ENCODE measurements at regions of chr7 and their contacts with region 1.

Region 1: GRCh38 chr7:27901028-27901760 is 161.2 kb downstream of the TAX1BP1 start:
- DNase-seq: peak; percentile 34
- H3K4me3 Mint-ChIP-seq: no peak overlapping the region
- H3K27ac Mint-ChIP-seq: no peak overlapping the region
- H3K4me1 Mint-ChIP-seq: peaks cover 19% of the 10 kb centered on the region
- H3K27me3 Mint-ChIP-seq: no peaks in the 10 kb centered on the region

Region 2: DNA sequence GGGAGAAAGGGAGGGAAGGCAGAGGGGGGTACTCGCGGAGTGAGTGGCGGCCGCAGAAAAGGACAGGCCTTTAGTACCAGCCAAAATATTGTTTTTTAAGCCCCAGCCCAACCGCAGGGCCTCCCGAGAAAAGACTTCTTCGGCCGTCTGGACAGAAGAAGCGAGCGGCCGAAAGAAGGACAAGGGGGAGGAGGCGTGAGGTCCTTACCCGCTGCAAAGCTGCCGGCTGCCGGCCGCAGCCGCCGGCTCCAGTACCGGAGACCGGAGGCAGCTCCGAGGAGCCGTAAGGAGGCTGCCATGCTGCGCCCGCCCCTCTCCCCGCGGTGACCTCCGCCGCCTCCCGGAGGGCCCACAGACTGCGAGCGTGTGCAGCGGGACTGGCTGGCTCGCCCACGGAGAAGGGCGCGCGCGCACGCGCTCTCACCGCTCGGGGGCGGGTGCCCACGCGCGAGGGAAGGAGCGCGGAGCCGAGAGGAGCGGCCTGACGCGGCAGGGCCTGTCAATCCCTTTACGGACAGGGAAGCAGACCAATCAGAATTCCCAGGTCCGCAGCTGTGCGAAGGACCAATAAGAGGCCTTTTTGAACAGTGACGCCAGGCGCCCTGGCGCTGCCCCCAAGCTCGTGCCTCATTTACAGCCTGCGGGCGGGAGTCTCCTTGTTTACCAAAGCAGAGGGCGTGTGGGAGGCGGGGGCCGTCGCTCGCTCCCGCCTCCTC is 238.5 kb before region 1 on chr7 and contains the start of gene HIBADH:
- CTCF ChIA-PET with region 1: no interaction called
- POLR2A ChIA-PET with region 1: no interaction called
- intact Hi-C with region 1: loop called (anchors 1 kb)
- DNase-seq: peak; percentile 96
- H3K4me3 Mint-ChIP-seq: peak within 1 kb of the TSS; percentile 76
- H3K27ac Mint-ChIP-seq: peak within 1 kb of the TSS; percentile 76
- H3K4me1 Mint-ChIP-seq: peaks cover 14% of the 10 kb centered on the region
- H3K27me3 Mint-ChIP-seq: no peaks in the 10 kb centered on the region
- total RNA-seq, gene HIBADH: 21.9 to 22.6 TPM

Region 3: DNA sequence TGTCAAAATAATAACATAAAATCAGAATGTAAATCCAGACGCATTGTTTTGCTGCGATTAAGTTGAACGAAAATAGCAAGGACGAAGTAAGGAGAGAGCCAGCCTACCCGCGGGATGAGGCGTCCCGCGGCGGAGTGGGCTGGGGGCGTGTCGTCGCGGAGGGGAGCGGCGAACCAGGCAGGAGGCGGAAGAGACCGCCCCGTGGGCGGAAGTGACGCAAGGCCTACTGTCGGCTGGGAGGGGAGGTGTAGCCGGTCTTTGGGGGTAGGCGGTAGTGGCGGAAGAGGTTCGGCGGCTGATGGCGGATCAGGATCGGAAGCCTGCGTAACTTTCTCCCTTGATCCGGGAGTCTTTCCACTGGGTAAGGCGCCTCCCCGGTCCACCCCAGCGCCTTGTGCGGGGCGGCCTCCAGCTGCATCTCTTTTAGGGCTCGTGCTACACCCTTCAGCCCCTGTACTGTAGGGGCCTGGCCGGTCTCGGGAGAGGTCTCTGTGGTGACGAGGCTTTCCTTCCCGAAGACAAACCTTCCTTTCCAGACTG is 161.2 kb before region 1 on chr7 and contains the start of gene TAX1BP1:
- CTCF ChIA-PET with region 1: no interaction called
- POLR2A ChIA-PET with region 1: no interaction called
- intact Hi-C with region 1: loop called (anchors 1 kb)
- DNase-seq: peak; percentile 97
- H3K4me3 Mint-ChIP-seq: peak within 1 kb of the TSS; percentile 87
- H3K27ac Mint-ChIP-seq: peak within 1 kb of the TSS; percentile 99
- H3K4me1 Mint-ChIP-seq: peaks cover 39% of the 10 kb centered on the region
- H3K27me3 Mint-ChIP-seq: no peaks in the 10 kb centered on the region
- total RNA-seq, gene TAX1BP1: 104 to 105 TPM

Region 4: GRCh38 chr7:27784393-27785053 is 116.7 kb before region 1 on chr7:
- CTCF ChIA-PET with region 1: no interaction called
- POLR2A ChIA-PET with region 1: interaction called, 3 read pairs
- intact Hi-C with region 1: loop called (anchors 5 kb)
- DNase-seq: no peak
- H3K4me3 Mint-ChIP-seq: no peak overlapping the region
- H3K27ac Mint-ChIP-seq: no peak overlapping the region
- H3K4me1 Mint-ChIP-seq: peaks cover 33% of the 10 kb centered on the region
- H3K27me3 Mint-ChIP-seq: no peaks in the 10 kb centered on the region

Region 5: DNA sequence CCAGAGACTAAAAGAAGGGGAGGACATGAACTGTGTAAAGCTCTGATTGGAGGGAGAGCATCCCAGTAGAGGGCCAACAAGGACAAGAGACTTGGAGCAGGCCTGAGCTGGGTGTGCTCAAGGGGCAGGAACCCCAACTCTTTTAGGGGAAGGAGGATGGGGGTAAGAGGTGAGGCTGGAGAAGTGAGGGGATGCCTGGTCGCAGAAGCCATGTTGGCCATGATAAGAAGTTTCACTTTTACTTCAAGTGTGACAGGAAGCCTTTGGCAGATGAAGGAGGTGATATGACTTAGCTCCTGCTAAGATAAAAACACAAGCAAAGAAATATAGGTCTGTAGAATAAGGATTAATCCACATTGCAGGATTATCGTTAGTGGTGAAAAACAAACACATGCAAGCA is 71.1 kb after region 1 on chr7:
- CTCF ChIA-PET with region 1: no interaction called
- POLR2A ChIA-PET with region 1: no interaction called
- intact Hi-C with region 1: loop called (anchors 10 kb)
- DNase-seq: peak; percentile 19
- H3K4me3 Mint-ChIP-seq: peak overlapping the region; percentile 28
- H3K27ac Mint-ChIP-seq: no peak overlapping the region
- H3K4me1 Mint-ChIP-seq: peaks cover 20% of the 10 kb centered on the region
- H3K27me3 Mint-ChIP-seq: no peaks in the 10 kb centered on the region

Measured in activated CD4-positive, alpha-beta memory T cell treated with anti-CD3 and anti-CD28 coated beads for 36 hours (primary cell).